MCF 10A (cell line): ENCODE measurements at regions of chr4 and their contacts with region 1.

Region 1: DNA sequence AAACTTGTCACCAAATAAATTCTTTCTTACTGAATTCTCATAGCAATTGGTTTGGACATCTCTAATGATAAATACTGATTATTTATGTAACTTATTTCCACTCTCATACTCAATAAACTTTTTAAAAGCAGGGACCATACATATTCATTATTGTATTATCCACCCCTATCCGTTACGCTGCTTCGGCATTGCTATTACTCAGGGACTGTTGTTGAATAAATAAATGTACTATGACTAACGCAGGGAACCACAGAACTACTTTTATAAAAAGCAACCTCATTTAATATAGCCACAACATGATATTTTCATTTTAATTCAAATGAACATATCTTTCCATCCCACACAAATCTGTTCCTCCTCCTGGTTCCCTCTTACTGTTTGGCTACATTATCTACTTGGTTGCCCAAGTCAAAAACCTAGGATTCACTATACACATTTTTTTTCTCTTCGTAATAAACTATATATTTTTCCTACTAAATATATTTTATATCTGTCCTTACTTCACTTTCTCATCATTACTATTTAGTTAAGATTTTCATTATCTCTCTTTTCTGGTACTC is 14.9 kb upstream of the ANKRD50 start:
- DNase-seq: no peak
- H3K4me3 Mint-ChIP-seq: no peak overlapping the region
- H3K27ac Mint-ChIP-seq: no peak overlapping the region
- H3K4me1 Mint-ChIP-seq: no peaks in the 10 kb centered on the region
- H3K27me3 Mint-ChIP-seq: no peaks in the 10 kb centered on the region
- CTCF ChIP-seq: no peak

Region 2: DNA sequence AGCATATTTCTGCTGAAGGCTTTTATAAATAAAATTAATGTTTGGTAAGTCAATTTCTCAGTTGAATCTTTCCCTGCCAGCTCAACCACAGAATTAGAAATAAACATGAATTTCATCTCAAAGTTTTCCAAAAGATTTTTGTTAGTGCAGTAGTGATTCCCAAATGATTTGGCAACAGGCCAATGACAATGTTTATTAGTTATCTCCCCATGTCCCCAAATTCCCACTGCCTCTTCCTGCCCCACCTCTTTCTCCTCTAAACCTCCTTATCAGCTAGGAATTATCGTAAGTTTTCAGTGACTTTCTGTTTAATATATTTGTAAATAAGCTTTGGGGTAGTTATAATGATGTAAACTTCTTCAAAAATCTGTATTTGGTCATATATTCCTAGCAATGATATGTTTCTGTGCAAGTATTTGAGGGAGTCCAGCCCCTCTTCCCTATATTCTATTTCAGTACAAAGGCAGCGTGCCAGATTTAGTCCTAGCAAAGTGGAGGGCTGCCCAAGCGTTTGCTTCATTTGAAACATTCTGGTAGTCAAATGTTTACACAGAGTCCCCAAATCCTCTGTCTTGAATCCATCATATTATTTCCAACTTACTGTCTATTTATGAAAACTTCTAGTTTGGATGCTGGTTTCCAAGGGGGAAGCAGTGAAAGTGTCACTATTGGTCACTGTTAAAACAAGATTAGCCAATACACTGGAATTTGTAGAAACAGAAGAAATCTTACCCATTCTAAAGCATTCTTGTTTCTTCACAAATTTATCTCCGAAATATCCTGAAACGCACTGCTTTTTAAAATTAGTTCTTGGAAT is 18.8 kb after region 1 on chr4:
- CTCF ChIA-PET with region 1: interaction called, 4 read pairs
- POLR2A ChIA-PET with region 1: no interaction called
- intact Hi-C with region 1: loop called (anchors 1 kb)
- DNase-seq: no peak
- H3K4me3 Mint-ChIP-seq: no peak overlapping the region
- H3K27ac Mint-ChIP-seq: no peak overlapping the region
- H3K4me1 Mint-ChIP-seq: no peaks in the 10 kb centered on the region
- H3K27me3 Mint-ChIP-seq: no peaks in the 10 kb centered on the region
- CTCF ChIP-seq: no peak

Region 3: DNA sequence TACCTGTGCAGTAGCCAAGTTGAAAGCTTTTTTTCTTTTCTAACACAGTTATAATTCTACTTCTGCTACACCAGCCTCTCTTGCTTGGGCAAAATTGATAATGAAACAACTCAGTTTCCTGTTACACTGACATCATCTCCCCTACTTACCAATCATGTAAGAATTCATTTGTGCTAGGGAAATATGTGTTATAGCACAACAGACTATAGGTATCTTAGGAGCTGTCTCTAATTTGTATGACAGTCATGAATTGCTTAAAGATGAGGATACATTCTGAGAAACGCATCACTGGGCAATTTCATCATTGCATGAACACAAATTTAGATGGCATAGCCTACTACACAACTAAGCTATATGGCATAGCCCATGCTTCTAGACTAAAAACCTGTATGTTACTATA is 231.4 kb after region 1 on chr4:
- CTCF ChIA-PET with region 1: no interaction called
- POLR2A ChIA-PET with region 1: no interaction called
- intact Hi-C with region 1: no loop called
- DNase-seq: no peak
- H3K4me3 Mint-ChIP-seq: no peak overlapping the region
- H3K27ac Mint-ChIP-seq: no peak overlapping the region
- H3K4me1 Mint-ChIP-seq: peaks cover 2% of the 10 kb centered on the region
- H3K27me3 Mint-ChIP-seq: no peaks in the 10 kb centered on the region
- CTCF ChIP-seq: no peak